ENCODE measurements at regions of chr15 and their contacts with region 1.

Region 1: GRCh38 chr15:39338266-39338665 is 242.6 kb upstream of the THBS1 start:
- DNase-seq: no peak

Region 2: DNA sequence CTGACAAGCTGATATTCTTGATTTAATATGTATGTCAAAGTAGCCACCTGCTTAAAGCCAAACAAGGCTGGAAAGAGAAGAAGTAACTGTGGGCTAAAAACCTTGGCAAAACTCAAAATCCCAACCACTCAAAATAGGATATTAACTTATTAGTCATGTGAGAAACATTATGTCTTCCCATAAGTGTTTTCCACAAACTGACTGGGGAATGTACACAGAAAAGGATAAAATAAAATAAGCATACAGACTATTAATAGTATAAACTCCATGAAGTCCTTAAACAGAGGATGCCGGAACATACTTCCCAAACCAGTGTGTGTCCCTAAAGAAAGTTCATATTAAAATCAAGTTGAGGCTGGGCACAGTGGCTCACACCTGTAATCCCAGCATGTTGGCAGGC is 21.0 kb before region 1 on chr15:
- intact Hi-C with region 1: loop called in 1 of 2 experiments (anchors 2 kb)
- DNase-seq: no peak

Region 3: GRCh38 chr15:39362821-39363561 is 24.7 kb after region 1 on chr15:
- intact Hi-C with region 1: no loop called
- DNase-seq: no peak